ENCODE measurements at regions of chr6 and their contacts with region 1.

Region 1: DNA sequence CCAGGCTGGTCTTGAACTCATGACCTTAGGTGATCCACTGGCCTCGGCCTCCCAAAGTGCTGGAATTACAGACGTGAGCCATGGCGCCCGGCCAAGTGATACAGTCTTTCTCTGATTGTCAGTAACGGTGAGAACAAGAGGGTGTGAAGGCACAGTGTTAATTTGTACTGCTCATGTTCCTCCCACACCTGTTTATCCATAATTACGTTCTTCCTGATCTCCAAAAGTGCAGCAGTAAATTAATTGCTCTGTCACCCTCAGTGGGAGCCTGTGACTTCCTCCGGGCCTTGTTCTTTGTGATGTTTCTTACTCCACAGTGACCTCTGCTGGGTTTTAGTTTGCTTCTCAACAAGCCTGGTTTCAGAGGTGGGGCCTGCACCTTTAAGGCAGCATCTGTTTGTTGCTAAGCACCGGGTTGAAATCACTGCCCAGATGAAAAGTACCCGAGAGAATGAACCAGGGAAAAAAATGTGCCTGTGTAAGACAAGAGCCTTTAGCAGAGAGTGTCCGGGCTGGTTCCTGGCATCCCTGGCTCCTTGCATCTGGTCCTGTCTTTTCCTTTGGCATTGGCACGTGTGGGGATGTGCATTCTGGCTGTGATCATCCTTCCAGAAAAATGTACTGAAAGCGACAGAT is 89.1 kb upstream of the CLDN20 start:
- DNase-seq: peak; percentile 70
- H3K4me3 Mint-ChIP-seq: no peak overlapping the region
- H3K27ac Mint-ChIP-seq: peak overlapping the region; percentile 51
- H3K4me1 Mint-ChIP-seq: peaks cover 31% of the 10 kb centered on the region
- H3K27me3 Mint-ChIP-seq: no peaks in the 10 kb centered on the region
- CTCF ChIP-seq: peak; percentile 52

Region 2: GRCh38 chr6:154928325-154928922 is 246.3 kb before region 1 on chr6:
- CTCF ChIA-PET with region 1: no interaction called
- intact Hi-C with region 1: loop called (anchors 1 kb)
- DNase-seq: peak; percentile 69
- H3K4me3 Mint-ChIP-seq: no peak overlapping the region
- H3K27ac Mint-ChIP-seq: no peak overlapping the region
- H3K4me1 Mint-ChIP-seq: peaks cover 29% of the 10 kb centered on the region
- H3K27me3 Mint-ChIP-seq: no peaks in the 10 kb centered on the region
- CTCF ChIP-seq: peak; percentile 34

Region 3: GRCh38 chr6:154995284-154996015 is 179.2 kb before region 1 on chr6 and contains the start of gene TIAM2:
- CTCF ChIA-PET with region 1: interaction called, 8 read pairs
- intact Hi-C with region 1: loop called (anchors 5 kb)
- DNase-seq: peak; percentile 28
- H3K4me3 Mint-ChIP-seq: peak within 1 kb of the TSS; percentile 60
- H3K27ac Mint-ChIP-seq: no peak within 1 kb of the TSS
- H3K4me1 Mint-ChIP-seq: peaks cover 28% of the 10 kb centered on the region
- H3K27me3 Mint-ChIP-seq: no peaks in the 10 kb centered on the region
- CTCF ChIP-seq: no peak
- total RNA-seq, gene TIAM2: 7.1 and 12.9 TPM in 2 replicates

Region 4: GRCh38 chr6:155121699-155122098 is 53.0 kb before region 1 on chr6:
- CTCF ChIA-PET with region 1: no interaction called
- intact Hi-C with region 1: loop called (anchors 1 kb)
- DNase-seq: no peak
- H3K4me3 Mint-ChIP-seq: no peak overlapping the region
- H3K27ac Mint-ChIP-seq: no peak overlapping the region
- H3K4me1 Mint-ChIP-seq: peaks cover 25% of the 10 kb centered on the region
- H3K27me3 Mint-ChIP-seq: no peaks in the 10 kb centered on the region
- CTCF ChIP-seq: no peak

Region 5: DNA sequence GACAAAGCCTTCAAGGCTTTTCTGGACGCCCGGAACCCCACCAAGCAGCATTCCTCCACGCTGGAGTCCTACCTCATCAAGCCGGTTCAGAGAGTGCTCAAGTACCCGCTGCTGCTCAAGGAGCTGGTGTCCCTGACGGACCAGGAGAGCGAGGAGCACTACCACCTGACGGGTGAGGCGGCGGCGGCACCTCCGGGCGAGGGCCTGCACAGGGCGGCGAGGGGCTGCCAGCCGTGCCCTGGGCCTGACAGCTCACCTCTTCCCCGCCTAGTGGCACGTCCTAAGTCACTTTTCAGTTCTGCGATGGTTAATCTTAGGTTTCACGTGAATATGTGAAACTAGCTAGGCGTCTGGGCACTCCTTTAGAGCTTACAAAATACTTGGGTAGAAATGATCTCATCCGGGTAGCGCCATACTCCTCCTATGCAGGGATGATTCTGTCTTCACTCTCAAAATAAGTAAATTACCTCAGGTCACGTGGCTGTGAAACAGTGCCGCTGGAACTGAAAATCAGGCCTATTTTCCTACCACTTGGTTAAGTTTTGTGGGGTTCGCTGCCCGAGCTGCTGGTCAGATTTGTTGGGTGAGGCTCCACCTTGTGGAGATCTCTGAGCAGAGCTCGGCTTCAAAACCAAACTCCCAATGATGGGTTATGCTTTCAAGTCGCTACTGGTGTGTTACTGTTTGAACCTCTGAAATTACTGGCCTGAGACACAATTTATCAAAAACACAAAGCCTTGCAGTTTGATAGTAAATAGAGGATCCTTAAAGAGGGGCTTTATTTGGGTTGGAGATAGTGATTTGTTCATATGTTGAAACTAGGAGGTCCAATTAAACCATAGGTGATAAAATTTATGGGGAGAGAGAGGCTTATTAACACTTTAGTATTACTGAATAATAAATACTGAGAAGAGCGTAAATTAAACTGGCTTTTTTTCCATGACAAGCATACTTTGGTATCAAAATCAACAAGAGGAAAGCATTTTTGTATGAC is 73.6 kb after region 1 on chr6:
- CTCF ChIA-PET with region 1: interaction called, 12 read pairs
- intact Hi-C with region 1: loop called (anchors 1 kb)
- DNase-seq: peak; percentile 16
- H3K4me3 Mint-ChIP-seq: no peak overlapping the region
- H3K27ac Mint-ChIP-seq: no peak overlapping the region
- H3K4me1 Mint-ChIP-seq: no peaks in the 10 kb centered on the region
- H3K27me3 Mint-ChIP-seq: no peaks in the 10 kb centered on the region
- CTCF ChIP-seq: peak; percentile 34